AG04449 (cell line): ENCODE measurements at regions of chr19 and their contacts with region 1.

Region 1: DNA sequence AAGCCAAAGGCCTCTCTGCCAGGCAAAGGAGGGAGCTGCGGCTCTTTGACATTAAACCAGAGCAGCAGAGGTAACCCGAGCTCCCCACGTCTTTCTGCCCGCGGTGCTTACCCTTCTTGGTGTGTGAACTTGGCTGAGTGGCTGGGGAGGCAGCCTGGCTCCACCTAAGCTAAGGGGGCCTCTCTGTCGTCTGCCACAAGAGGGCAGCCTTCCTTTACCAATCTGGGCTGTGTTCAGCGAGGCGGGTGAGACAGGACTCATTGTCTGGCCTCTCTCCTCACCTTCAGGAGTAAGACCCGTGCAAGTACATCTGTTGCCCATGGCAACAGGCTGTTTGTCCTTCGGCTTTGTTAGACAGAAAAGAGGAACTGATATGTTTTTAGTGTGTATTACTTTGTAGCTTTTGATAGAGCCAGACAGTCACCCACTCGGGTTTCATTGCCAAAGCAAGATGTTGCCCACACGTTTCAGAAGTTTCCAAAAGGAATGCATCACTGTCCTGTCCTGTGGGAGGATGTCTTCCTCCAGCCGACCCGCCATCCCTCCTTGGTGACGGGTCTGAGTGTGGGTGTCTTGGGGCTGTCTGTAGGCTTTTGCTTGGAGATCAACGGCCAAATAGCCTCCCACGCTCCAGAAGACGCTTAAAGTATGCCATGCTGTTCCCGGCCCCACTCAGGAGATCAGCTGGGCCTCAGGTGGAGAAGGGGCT is 4.6 kb downstream of the POP4 start:
- DNase-seq: no peak
- H3K4me3 ChIP-seq: no peak overlapping the region
- CTCF ChIP-seq: peak; percentile 93

Region 2: GRCh38 chr19:29442910-29443309 is 167.8 kb before region 1 on chr19:
- CTCF ChIA-PET with region 1: no interaction called
- POLR2A ChIA-PET with region 1: no interaction called
- DNase-seq: no peak
- H3K4me3 ChIP-seq: no peak overlapping the region
- CTCF ChIP-seq: no peak

Region 3: DNA sequence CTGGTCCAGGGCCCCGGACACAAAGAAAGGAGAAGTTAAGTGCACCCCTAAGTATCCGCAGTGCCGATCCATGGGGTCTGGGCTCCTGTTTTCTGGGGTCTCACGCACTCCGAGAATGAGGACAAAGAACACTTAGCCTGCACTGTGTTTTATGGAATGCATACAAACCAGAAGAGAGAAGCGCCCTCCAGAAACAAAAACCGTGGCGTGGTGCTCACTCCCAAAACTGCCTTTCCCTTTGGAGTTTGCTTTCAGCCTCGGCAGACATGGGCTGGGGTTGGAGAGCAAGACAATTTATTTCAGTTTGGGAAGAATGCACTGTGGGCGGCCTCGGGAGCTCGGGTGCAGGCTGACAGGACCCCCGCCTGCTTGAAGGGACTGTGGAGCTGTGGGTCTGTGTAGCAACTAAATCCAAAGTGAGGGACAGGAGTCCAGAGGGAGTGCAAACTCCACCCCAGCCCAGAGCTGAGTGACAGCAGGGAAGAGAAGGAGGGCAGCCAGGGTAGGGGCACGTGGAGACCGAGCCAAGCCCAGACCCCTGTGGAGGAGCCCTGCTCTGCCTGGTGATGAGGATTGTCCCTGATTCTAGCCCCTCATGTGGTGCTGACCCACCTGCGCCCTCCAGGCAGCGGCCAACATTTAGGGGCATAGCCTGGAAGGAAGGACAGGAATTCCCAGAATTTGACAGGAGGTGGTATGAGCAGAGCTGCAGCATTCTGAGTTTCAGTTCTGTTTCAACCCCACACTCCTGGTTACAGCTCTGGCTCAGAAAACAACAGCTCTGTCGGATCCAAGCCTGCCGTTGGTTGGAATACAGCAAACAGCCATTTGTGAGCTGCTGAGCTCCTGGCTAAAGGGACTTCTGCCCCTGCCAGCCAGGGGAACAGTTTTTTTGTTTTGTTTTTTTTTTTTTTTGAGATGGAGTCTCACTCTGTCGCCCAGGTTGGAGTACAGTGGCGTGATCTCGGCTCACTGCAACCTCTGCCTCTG is 42.4 kb before region 1 on chr19:
- CTCF ChIA-PET with region 1: no interaction called
- POLR2A ChIA-PET with region 1: no interaction called
- DNase-seq: no peak
- H3K4me3 ChIP-seq: no peak overlapping the region
- CTCF ChIP-seq: no peak

Region 4: GRCh38 chr19:29622138-29623070 is 11.7 kb after region 1 on chr19:
- CTCF ChIA-PET with region 1: interaction called, 151 read pairs
- POLR2A ChIA-PET with region 1: interaction called, 4 read pairs
- DNase-seq: no peak
- H3K4me3 ChIP-seq: no peak overlapping the region
- CTCF ChIP-seq: no peak

Region 5: DNA sequence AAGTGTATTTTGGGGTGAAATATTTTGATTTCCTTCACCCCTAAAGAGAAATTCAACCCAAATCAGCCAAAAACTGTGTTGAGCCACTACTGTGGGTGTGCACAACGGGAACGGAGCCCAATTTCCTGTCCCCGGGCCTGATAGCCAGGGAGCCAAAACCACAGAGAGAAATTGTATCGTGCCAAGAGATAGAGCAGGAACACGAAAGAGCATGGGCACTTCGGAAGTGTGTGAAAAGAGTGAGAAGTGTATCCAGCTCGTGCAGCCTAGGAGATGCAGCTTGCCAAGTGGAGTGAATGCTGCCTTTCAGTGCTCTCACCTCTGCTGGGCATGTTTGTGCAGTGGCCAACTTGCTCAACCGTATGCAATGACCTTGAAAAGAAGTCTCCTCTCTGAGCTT is 35.2 kb after region 1 on chr19:
- CTCF ChIA-PET with region 1: interaction called, 17 read pairs
- POLR2A ChIA-PET with region 1: no interaction called
- DNase-seq: no peak
- H3K4me3 ChIP-seq: no peak overlapping the region
- CTCF ChIP-seq: no peak

Region 6: DNA sequence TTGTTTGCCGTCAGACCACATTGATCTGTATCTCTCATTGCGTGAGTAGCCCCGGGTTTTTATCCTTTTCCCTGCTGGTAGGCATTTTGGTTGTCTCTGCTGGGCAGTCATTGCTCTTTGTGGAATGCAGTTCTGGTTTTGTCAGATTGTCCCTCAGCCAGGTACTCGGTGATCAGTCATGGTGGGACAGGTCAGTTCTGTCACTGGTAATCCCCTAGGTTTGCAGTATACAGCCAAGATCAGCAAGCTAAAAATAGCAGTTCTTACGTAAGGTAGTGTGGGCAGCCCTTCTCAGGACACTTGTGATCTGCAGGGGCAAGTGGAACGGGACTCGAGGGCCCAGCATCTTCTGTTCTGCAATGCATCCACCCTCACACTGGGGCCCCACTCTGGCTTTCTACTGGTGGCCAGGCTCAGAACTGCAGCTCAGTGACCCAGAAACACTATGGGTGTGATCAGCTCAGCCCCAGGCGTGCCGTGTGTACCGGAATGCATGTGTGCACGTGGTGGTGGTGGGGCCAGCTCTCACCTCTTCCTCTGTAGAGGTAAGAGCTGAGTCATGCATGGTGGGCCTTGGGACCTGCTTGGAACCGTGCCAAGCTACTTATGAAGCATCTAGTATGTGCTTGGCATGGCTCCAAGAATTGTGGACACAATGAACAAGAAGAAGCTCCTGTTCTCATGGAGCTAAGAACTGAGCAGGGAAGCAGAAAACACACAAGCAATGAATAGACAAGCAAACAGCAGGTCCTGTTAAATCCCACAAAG is 60.9 kb after region 1 on chr19:
- CTCF ChIA-PET with region 1: interaction called, 140 read pairs
- POLR2A ChIA-PET with region 1: interaction called, 3 read pairs
- DNase-seq: no peak
- H3K4me3 ChIP-seq: no peak overlapping the region
- CTCF ChIP-seq: no peak

Region 7: DNA sequence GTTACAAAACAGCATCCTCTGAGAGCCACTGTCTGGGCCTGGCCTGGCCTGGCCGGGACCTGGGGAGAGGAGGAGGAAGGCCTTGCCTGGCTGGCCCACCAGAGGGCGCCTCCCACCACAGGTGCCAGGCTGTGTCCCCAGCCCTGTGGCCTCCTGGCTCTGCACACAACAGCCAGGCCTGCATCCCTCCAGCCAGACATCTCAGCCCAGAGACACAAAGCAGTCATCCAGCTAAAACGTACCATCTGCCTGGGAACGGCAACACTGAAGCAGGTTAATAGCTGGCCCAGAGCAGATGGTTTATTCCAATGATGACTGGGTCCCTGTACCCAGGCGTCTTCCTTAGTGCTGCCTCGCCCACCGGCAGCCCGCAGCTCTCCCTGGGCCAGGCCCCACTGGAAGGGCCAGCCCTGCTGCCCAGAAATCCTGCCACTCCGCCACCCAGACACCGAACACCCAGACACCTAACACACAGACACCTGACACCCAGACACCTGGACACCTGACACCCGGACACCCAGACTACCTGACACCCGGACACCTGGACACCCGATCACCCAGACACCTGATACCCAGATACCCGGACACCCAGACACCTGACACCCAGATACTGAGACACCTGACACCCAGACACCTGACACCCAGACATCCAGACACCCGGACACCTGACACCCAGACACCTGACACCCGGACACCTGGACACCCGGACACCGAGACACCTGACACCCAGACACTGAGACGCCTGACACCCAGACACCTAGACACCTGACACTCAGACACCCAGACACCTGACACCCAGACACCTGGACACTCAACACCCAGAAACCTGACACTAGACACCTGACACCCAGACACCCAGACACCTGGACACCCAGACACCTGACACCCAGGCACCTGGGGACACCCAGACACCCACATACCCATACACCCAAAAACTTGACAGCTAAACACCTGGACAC is 84.2 kb after region 1 on chr19:
- CTCF ChIA-PET with region 1: interaction called, 159 read pairs
- POLR2A ChIA-PET with region 1: interaction called, 4 read pairs
- DNase-seq: no peak
- H3K4me3 ChIP-seq: no peak overlapping the region
- CTCF ChIP-seq: peak; percentile 97

Region 8: DNA sequence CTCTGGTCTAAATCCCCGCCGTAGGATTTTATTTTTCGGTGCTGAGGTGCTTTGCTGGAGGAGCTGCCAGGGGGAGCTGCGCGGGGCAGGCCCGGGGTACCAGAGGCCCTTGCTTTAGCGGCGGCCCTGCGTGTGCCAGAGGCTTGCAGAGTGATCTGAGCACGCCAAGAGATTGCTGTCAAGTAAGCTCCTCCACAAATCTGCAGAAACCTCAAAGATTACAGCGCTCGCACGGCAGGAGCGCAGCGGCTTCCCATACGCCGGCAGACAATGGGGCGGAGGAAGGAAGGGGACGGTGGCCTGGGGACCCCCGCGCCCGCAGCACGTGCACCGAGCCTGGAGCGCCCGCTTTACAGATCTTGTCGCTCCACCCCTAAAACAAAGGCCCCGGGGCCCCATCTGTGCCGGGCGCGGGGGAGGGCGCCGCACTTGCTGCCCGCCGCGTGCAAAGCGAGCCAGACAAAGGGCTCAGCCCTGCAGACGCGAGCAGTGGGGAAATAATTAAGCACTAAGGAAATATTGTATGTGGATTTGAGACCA is 113.5 kb after region 1 on chr19:
- CTCF ChIA-PET with region 1: interaction called, 647 read pairs
- POLR2A ChIA-PET with region 1: no interaction called
- DNase-seq: no peak
- H3K4me3 ChIP-seq: peak overlapping the region; percentile 34
- CTCF ChIP-seq: no peak